ENCODE measurements at regions of chr17 and their contacts with region 1.

Region 1: DNA sequence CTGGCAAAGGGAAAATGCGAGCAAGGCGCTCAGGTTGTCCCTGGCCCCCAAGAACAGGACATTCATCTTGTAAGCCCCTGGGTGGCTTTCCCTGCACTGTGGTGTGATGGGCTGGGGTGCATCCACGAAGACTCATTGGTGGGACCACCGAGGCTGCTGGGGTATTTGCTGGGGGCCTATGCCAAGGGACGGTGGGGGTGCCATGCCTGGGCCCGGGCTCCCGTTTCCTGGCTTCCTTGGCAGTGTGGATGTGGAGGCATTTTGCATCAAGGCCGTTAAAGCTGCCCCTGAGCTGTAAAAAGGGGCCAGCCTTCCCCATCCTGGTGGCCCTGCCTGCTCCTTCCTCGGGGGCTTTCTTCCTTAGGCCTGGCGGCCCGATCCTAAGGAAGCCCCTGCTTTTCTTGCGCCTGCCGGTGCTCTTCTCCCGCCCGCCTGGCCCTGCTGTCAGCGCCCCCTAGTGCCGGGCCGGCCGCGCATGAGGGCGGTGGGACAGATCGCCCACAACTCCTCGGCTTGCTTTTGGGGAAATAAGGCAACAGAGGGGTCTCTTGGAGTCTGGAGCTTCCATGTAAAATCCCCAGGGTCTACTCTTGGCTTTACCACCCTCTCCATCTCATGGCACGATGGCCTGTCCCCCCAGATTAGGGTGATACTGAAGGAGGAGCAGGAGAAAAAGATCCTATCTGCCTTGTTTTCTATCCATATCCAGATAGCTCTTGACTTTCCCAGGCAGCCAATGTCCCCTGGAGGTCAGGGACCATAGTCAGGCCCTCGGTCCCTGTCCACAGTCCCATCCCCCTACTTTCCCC is 9.8 kb upstream of the TBX2 start:
- DNase-seq: peak; percentile 67
- ATAC-seq: peak; percentile 74

Region 2: GRCh38 chr17:61002316-61002736 is 387.5 kb before region 1 on chr17:
- intact Hi-C with region 1: loop called (anchors 10 kb)
- DNase-seq: no peak
- ATAC-seq: no peak

Region 3: DNA sequence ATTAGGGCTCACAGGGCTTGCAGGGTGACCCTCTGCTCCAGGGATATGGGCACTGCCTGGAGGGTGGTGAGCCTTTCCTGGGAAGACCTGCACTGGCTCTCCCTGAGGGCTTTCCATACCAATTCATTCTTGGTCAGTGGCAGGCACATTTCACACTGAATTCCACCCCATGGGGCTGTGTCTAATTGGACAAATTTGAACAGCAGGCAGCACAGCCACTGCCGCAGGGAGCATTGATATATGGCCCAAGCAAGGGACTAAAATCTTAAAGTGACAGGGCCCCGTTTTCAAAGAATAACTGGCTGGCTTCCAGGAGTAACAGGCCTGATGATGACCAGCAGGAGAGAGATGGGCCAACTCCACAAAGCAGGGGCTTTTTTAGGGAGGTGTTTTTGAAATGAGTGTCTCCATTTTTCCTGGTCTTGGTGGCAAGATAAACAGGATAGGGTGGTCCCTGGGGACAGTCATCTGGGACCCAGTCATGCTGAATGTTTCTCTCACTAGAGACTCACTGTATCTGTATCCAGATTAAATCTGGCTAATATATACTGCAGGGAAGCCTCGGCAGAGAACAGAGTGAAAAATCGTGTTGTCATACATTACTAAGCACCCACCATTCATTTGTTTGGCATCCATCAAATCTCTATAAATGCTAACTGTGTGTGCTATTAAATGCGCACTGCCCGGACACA is 64.3 kb before region 1 on chr17:
- intact Hi-C with region 1: loop called (anchors 10 kb)
- DNase-seq: no peak
- ATAC-seq: no peak

Region 4: GRCh38 chr17:61556224-61557188 is 166.6 kb after region 1 on chr17:
- intact Hi-C with region 1: no loop called
- DNase-seq: no peak
- ATAC-seq: no peak

Region 5: GRCh38 chr17:61583242-61583641 is 193.4 kb after region 1 on chr17:
- intact Hi-C with region 1: no loop called
- DNase-seq: no peak
- ATAC-seq: no peak

Measured in Right ventricle myocardium superior (tissue), 1 donor.